ENCODE measurements at regions of chr15 and their contacts with region 1.

Region 1: DNA sequence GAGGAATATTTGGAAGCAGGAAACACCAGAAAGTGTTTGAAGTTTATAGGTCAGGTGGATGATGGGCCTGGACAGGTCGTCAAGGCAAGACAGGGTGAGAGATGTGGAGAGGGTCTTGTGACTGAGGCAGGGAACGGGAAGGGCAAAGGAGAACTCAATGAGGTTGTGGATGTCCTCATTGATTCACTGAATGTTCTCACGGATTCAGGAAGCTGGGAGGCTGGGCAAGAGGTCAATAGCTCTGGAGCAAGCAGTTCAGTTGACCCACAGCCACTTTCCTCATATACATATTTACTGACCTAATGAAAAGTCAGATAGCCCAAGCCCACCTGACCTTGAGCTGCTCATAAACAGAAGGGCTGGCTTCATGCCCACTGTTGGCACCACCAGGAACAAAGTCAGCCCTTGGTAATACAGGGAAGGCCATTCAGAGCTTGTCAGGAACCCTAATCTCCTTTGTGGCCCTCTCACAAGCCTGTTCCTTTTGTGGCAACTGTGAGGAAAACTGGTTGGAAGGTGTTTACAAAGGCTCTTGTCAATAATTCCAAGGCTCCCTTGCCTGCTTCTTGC is 31.6 kb downstream of the ARRDC4 start:
- DNase-seq: no peak
- ATAC-seq: no peak
- H3K4me3 ChIP-seq: no peak overlapping the region
- H3K27ac ChIP-seq: no peak overlapping the region
- H3K4me1 ChIP-seq: no peaks in the 10 kb centered on the region
- H3K27me3 ChIP-seq: no peaks in the 10 kb centered on the region
- CTCF ChIP-seq: no peak
- EP300 ChIP-seq: no peak
- POLR2A ChIP-seq: no peak
- RAD21 ChIP-seq: no peak

Region 2: GRCh38 chr15:97968380-97968779 is 23.7 kb before region 1 on chr15:
- CTCF ChIA-PET with region 1: no interaction called
- POLR2A ChIA-PET with region 1: no interaction called
- RAD21 ChIA-PET with region 1: no interaction called
- SMC1A ChIA-PET with region 1: no interaction called
- in situ Hi-C with region 1: no loop called
- intact Hi-C with region 1: loop called (anchors 2 kb)
- DNase-seq: no peak
- ATAC-seq: no peak
- H3K4me3 ChIP-seq: no peak overlapping the region
- H3K27ac ChIP-seq: no peak overlapping the region
- H3K4me1 ChIP-seq: no peaks in the 10 kb centered on the region
- H3K27me3 ChIP-seq: no peaks in the 10 kb centered on the region
- CTCF ChIP-seq: no peak
- EP300 ChIP-seq: no peak
- POLR2A ChIP-seq: no peak
- RAD21 ChIP-seq: no peak

Region 3: DNA sequence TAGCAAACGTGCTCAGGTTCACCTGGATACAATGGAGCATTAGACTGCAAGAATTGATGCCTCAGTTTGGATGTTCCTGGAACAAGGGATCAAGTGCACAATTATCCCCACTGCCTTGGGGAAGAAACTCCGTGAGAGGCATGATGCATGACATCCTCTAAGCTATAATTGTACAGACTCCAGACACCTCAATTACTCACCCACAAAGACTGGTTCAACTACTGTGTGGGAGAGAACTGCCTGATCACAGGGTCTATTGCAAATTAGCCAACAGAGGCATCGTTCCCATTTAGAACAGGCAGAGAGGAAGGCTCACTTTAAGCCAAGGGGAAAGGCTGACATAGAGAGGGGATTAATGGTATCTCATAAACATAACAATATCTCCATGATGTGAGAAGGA is 11.9 kb after region 1 on chr15:
- CTCF ChIA-PET with region 1: no interaction called
- POLR2A ChIA-PET with region 1: no interaction called
- RAD21 ChIA-PET with region 1: no interaction called
- SMC1A ChIA-PET with region 1: no interaction called
- in situ Hi-C with region 1: no loop called
- intact Hi-C with region 1: no loop called
- DNase-seq: no peak
- ATAC-seq: no peak
- H3K4me3 ChIP-seq: no peak overlapping the region
- H3K27ac ChIP-seq: no peak overlapping the region
- H3K4me1 ChIP-seq: no peaks in the 10 kb centered on the region
- H3K27me3 ChIP-seq: no peaks in the 10 kb centered on the region
- CTCF ChIP-seq: no peak
- EP300 ChIP-seq: no peak
- POLR2A ChIP-seq: no peak
- RAD21 ChIP-seq: no peak

Measured in GM12878 (cell line).